AG04449 (cell line): ENCODE measurements at regions of chr19 and their contacts with region 1.

Region 1: GRCh38 chr19:18456974-18457373 is 19.0 kb upstream of the ISYNA1 start:
- DNase-seq: no peak
- H3K4me3 ChIP-seq: no peak overlapping the region
- CTCF ChIP-seq: no peak

Region 2: GRCh38 chr19:18478569-18479311 is 21.8 kb after region 1 on chr19:
- CTCF ChIA-PET with region 1: interaction called, 117 read pairs
- POLR2A ChIA-PET with region 1: no interaction called
- DNase-seq: peak; percentile 67
- H3K4me3 ChIP-seq: no peak overlapping the region
- CTCF ChIP-seq: no peak

Region 3: DNA sequence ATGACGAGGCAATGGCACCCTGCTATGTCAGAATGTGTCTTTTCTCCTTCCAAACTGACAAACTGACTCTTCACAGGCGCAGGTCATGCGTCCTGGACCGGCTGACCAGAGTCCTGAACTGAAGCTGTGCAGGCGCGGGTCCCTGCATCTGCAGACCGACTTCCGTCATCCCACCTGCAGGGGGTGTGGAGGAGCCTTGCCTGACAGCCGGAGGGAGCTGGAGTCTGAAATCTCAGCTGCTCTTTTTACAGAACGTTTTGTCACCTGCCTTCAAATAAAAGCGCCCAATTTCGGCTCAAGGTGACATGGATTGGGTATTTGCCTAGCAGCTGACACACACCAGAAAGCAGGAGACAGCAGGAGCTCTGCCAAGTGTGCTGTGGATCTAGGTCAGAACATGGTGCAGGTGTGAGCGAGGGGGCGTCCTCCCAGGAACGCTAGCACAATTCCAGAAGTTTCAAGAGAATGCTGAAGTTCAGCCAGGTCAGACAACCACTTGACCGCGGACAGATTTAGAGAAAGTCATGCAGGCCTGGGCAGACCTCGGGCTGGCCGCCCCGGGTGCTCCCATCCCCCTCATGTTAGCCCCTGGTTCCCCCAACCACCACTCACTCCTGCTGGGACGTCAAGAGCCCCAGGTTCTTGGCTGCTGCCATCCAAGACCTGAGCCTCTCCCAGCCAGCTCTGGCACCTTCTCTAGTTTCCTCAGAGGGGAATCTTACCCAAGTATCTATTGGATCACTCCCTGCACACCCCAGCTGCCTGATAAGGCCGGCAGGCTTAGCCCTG is 32.1 kb after region 1 on chr19:
- CTCF ChIA-PET with region 1: interaction called, 11 read pairs
- POLR2A ChIA-PET with region 1: no interaction called
- DNase-seq: no peak
- H3K4me3 ChIP-seq: no peak overlapping the region
- CTCF ChIP-seq: peak; percentile 24